HepG2 (cell line): ENCODE measurements at regions of chr2 and their contacts with region 1.

Region 1: GRCh38 chr2:10434886-10435819 is 13.0 kb downstream of the ODC1 start:
- DNase-seq: peak; percentile 80
- ATAC-seq: peak; percentile 82
- H3K4me3 ChIP-seq: peak overlapping the region in 1 of 3 experiments; percentile 28; a peak in 1 of 6 replicates
- H3K27ac ChIP-seq: no peak overlapping the region
- H3K4me1 ChIP-seq: peaks cover 57% of the 10 kb centered on the region
- H3K27me3 ChIP-seq: peaks cover 10 to 49% of the 10 kb centered on the region in 2 experiments
- CTCF ChIP-seq: peak; percentile 100
- EP300 ChIP-seq: no peak
- POLR2A ChIP-seq: no peak
- RAD21 ChIP-seq: peak; percentile 100

Region 2: DNA sequence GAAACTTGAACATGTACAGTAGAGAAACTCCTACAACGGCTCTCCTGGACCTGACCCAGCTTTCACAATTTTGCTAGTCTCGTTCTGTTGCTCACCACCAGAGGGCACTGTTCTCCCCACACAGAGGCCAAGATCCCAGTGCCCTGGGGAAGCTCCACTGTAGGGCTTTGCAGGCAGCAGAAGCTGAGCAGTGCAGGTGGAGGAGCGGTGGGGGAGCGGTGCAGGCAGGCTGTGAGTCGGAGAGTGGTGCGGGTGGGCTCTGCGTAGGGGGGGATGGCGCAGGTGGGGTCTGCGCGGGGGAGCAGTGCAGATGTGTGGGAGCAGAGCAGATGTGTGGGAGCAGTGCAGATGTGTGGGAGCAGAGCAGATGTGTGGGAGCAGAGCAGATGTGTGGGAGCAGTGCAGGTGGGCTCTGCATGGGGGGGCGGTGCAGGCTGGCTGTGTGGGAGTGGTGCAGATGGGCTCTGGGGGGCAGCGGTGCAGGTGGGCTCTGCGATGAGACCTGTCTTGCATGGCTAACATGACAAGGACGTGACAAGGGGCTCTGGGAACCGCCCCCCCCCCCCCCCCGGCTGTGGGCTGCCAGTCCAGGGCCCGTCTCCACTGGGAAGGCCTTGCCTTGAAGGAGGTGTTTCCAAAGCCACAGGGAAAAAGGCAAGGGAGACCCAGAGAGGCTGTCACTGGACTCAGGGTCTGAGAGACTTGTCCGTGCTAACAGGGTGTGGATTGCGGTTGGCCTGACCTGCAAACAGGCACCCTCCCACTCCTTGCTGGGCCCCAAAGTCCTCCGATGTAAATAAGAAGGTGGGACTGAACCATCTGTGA is 362.3 kb before region 1 on chr2:
- CTCF ChIA-PET with region 1: interaction called, 32 read pairs
- POLR2A ChIA-PET with region 1: interaction called, 8 read pairs
- in situ Hi-C with region 1: loop called (anchors 5 kb)
- intact Hi-C with region 1: no loop called
- DNase-seq: peak; percentile 86
- ATAC-seq: peak; percentile 95
- H3K4me3 ChIP-seq: no peak overlapping the region; a peak in 1 of 6 replicates
- H3K27ac ChIP-seq: no peak overlapping the region
- H3K4me1 ChIP-seq: peaks cover 12% of the 10 kb centered on the region
- H3K27me3 ChIP-seq: peaks cover 8 to 57% of the 10 kb centered on the region in 2 experiments; a peak in 4 of 5 replicates
- CTCF ChIP-seq: peak; percentile 97
- EP300 ChIP-seq: no peak
- POLR2A ChIP-seq: no peak
- RAD21 ChIP-seq: peak; percentile 86

Region 3: DNA sequence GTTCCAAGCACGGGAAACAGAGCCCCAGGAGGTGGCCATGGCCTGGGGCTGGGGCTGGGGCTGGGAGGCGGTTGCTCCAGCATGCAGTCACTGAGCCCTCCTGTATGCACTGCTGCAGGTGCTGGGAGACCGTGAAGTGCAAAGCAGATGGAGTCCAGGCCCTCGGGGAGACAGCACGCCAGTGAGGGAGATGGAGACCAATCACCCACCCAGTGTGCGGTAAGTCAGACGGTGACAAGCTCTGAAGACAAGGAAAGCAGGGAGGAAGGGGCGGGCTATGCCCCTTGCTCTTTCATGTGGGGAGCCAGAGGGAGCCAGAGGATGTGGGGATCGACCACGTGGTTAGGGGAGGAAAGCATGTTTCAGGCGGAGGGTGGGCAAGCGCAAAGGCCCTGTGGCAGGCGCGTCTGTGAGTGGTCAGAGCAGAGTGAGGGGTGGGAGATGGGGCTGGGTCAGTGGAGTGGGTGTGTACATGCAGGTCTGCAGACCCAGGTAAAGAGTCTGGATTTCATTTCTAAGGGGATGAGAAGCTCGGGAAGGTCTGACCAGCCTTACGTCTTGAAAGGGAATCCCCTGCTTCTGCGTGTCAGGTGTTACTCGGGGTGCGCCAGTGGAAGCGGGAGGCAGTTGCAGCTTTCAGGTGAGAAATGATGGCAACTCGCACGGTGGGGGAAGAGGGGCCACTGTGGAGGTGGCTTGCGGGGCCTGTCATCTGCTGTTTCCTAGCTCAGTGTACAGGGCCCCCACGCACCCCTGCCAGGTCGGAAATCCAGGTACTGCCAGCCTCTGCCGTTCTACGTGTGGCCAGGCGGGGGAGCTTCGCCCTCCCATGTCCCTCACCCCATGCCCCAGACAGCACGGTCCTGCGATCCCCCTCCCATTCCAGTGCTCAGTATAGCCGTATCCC is 293.2 kb before region 1 on chr2:
- CTCF ChIA-PET with region 1: interaction called, 6 read pairs
- POLR2A ChIA-PET with region 1: no interaction called
- in situ Hi-C with region 1: no loop called
- intact Hi-C with region 1: loop called (anchors 5 kb)
- DNase-seq: no peak
- ATAC-seq: peak; percentile 76
- H3K4me3 ChIP-seq: no peak overlapping the region
- H3K27ac ChIP-seq: no peak overlapping the region
- H3K4me1 ChIP-seq: peaks cover 13% of the 10 kb centered on the region
- H3K27me3 ChIP-seq: no peaks in the 10 kb centered on the region
- CTCF ChIP-seq: peak; percentile 89
- EP300 ChIP-seq: no peak
- POLR2A ChIP-seq: no peak
- RAD21 ChIP-seq: peak; percentile 55

Region 4: DNA sequence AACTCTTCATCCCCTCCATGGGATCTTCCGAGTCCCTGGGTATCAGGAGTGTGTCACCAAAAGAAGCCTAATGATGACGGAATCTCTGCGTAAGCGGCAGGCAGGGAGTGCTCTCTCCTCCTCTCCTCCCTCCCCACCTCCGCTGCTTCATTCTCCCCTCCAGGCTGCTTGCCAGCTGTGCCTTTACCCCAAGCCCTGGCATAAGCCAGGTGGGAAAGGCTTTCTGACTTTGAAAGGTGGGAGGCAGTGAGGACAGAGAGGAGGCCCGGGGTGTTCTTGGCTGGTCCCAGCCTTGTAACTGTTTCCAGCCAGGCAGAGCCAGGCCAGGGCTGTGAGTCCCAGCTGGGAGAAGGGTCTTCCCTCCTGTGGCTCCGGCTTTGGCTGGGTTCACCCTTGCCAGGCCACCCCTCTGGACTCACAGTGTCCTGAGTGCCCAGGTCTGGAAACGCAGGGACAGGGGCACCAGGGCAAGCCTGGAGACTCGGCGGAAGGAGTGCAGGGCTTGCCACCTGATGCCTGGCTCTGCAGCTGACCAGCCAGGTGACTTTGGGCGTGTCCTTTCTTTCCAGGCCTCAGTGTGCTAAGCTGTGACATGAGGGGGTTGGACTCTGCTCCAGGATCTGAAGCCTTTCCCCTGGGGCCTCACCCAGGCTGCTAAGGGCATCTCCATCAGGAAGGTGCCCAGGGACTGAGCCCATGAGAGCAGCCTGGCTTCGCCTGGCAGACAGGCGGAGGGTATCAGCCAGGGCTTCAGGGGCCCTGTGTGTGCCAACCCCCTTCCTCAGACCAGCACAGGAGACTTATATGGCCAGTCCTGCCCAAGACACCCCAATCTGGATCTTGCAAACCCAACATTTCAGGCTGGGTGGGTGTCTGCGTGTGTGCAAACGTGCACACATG is 165.2 kb before region 1 on chr2:
- CTCF ChIA-PET with region 1: interaction called, 10 read pairs
- POLR2A ChIA-PET with region 1: no interaction called
- in situ Hi-C with region 1: no loop called
- intact Hi-C with region 1: loop called (anchors 1 kb)
- DNase-seq: no peak
- ATAC-seq: peak; percentile 12
- H3K4me3 ChIP-seq: peak overlapping the region in 1 of 3 experiments; percentile 50; a peak in 1 of 6 replicates
- H3K27ac ChIP-seq: no peak overlapping the region
- H3K4me1 ChIP-seq: peaks cover 63% of the 10 kb centered on the region
- H3K27me3 ChIP-seq: peaks cover 12 to 52% of the 10 kb centered on the region in 2 experiments
- CTCF ChIP-seq: no peak
- EP300 ChIP-seq: no peak
- POLR2A ChIP-seq: no peak
- RAD21 ChIP-seq: no peak

Region 5: GRCh38 chr2:10448208-10448645 is 13.1 kb after region 1 on chr2 and contains the start of gene ODC1:
- CTCF ChIA-PET with region 1: no interaction called
- POLR2A ChIA-PET with region 1: interaction called, 38 read pairs
- in situ Hi-C with region 1: no loop called
- intact Hi-C with region 1: no loop called
- DNase-seq: peak; percentile 88
- ATAC-seq: peak; percentile 62
- H3K4me3 ChIP-seq: peak within 1 kb of the TSS; percentile 58 to 75 (median 70)
- H3K27ac ChIP-seq: peak within 1 kb of the TSS; percentile 90
- H3K4me1 ChIP-seq: peaks cover 67% of the 10 kb centered on the region
- H3K27me3 ChIP-seq: no peaks in the 10 kb centered on the region
- CTCF ChIP-seq: no peak
- EP300 ChIP-seq: no peak
- POLR2A ChIP-seq: no peak; a peak in 1 of 4 replicates
- RAD21 ChIP-seq: peak; percentile 49; the same call in 1 of the 2 replicates
- total RNA-seq, gene ODC1: 371 and 422 TPM in 2 replicates